ENCODE measurements at regions of chr22 and their contacts with region 1.

Region 1: GRCh38 chr22:30606455-30607299 is at the start of gene TCN2:
- DNase-seq: peak; percentile 64
- H3K4me3 ChIP-seq: peak within 1 kb of the TSS; percentile 27 to 48 (median 45)
- H3K27ac ChIP-seq: no peak within 1 kb of the TSS
- H3K4me1 ChIP-seq: peaks cover 16% of the 10 kb centered on the region
- H3K27me3 ChIP-seq: no peaks in the 10 kb centered on the region
- CTCF ChIP-seq: no peak
- total RNA-seq, gene TCN2: 3.6 to 9.3 TPM

Region 2: DNA sequence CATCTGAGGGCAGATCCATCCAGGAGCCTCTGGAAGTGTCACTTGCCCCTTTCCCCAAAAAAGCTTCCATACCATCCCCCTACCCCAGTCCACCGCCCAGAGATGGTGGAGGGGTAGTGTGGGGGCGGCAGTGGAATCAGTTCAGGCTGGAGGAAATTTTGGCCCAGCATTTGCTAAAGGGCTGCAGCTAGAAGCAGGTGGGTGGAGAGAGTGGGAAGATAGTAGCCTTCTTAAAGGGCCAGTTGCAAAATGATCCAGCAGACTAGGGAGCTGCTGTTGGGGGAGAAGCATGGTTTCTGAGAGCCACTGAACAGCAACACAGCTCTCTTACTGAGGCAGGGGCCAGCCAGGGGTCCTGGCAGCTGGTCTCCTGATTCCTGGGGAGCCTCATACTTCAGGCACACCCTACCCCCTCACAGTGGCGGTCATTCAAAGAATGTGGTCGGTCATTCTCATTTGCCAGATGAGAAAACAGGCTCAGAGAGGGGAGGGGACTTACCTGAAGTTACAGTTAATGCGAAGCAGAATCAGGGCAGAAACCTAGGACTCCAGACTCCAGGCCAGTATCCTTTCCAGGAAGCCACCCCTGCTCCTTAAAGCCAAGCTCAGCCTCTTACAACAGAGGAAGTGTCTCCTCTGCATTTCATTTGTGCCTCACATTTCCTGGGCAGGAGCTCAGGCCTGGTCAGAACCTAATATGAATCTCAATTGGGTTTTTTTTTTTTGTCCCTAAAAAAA is 204.5 kb before region 1 on chr22:
- CTCF ChIA-PET with region 1: interaction called, 11 read pairs
- dilution Hi-C with region 1: no loop called
- in situ Hi-C with region 1: no loop called
- intact Hi-C with region 1: no loop called
- DNase-seq: no peak
- H3K4me3 ChIP-seq: no peak overlapping the region
- H3K27ac ChIP-seq: no peak overlapping the region
- H3K4me1 ChIP-seq: peaks cover 40% of the 10 kb centered on the region
- H3K27me3 ChIP-seq: no peaks in the 10 kb centered on the region
- CTCF ChIP-seq: no peak

Region 3: DNA sequence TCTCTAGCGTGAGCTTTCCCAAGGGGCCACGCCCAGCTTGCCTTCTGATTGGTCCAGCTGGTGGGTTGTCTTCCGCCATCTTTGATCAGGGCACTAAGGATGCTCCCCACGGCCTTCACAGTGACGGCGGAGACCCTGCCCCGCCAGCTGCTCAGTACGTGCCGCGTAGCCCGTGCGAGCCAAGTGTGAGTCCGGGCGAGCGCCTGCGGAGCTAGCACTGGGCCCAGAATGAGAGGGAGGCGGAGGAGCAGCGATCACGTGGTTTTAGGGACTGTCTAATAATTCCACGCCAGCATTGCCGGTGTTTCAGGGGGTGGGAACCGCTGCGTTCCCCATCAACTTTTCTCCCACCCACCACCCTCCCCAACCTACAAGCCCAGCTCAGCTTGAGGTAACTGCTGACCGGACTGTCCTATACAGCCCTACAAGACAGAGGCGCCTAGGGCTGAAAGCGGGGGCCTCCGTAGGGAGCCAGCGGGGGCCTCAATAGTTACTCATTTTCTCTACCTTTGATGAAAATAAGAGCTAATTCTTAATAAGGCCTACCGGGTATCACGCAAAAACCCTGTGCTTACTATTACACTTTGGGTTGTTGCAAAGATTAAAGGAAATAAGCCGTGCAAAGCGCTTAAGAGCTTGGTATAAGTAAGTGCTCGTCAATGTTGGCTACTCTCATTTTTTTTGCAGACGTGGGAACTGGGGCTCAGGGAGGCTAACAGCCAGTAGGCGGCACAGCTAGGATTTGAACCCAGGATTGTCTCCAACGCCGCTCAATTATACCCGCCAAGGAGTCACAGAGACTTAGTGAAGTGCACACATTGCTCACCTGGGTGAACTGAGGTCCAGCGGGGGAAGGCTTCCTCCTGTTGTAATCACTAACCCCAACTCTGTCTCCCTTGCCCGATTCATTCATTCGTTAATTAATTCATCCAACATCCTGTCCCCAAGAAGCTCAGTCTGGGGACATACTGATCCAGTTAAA is 182.4 kb before region 1 on chr22:
- CTCF ChIA-PET with region 1: no interaction called
- dilution Hi-C with region 1: no loop called
- in situ Hi-C with region 1: no loop called
- intact Hi-C with region 1: no loop called
- DNase-seq: peak; percentile 98
- H3K4me3 ChIP-seq: peak overlapping the region in 2 of 3 experiments; percentile 26 to 37
- H3K27ac ChIP-seq: peak overlapping the region; percentile 94
- H3K4me1 ChIP-seq: peaks cover 76% of the 10 kb centered on the region
- H3K27me3 ChIP-seq: no peaks in the 10 kb centered on the region
- CTCF ChIP-seq: no peak

Region 4: DNA sequence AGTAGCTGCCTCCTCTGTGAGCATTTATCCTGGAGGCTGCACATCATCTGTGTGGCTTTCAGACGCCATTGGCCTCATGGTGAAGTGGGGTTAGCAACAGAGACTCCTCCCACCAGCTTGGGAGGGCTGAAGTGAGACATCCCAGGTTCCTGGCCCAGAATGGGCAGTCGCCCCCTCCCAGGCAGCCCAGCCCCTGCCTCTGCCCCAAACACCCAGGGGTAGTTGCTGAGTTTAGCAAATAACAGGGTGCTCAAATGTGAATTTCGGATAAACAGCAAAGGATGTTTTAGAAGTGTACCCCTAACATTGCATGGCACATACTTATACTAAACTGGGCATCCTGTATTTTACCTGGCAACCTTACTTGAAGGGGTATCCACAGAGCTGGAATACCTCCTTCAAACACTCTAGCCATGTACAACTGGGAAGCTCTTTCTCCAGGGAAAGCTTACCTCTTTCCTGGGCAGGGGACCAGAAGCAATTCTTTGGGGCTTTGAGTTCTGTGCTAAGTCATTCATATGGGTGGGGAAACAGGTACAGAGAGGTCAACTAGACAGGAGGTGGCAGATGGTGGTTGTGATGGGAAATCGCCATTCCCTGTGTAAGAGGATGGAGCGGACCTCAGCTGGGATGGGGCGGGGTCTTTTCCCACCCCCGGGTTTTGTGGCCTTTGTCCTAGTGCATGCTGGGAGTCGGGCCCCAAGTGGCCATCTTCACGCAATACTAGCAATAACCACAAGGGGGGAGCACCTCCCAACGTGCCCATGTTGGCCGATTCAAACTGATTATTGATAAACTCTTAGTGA is 161.8 kb before region 1 on chr22:
- CTCF ChIA-PET with region 1: no interaction called
- dilution Hi-C with region 1: no loop called
- in situ Hi-C with region 1: no loop called
- intact Hi-C with region 1: loop called (anchors 1 kb)
- DNase-seq: peak; percentile 34
- H3K4me3 ChIP-seq: no peak overlapping the region
- H3K27ac ChIP-seq: no peak overlapping the region
- H3K4me1 ChIP-seq: peaks cover 14% of the 10 kb centered on the region
- H3K27me3 ChIP-seq: no peaks in the 10 kb centered on the region
- CTCF ChIP-seq: peak; percentile 74 to 80

Region 5: DNA sequence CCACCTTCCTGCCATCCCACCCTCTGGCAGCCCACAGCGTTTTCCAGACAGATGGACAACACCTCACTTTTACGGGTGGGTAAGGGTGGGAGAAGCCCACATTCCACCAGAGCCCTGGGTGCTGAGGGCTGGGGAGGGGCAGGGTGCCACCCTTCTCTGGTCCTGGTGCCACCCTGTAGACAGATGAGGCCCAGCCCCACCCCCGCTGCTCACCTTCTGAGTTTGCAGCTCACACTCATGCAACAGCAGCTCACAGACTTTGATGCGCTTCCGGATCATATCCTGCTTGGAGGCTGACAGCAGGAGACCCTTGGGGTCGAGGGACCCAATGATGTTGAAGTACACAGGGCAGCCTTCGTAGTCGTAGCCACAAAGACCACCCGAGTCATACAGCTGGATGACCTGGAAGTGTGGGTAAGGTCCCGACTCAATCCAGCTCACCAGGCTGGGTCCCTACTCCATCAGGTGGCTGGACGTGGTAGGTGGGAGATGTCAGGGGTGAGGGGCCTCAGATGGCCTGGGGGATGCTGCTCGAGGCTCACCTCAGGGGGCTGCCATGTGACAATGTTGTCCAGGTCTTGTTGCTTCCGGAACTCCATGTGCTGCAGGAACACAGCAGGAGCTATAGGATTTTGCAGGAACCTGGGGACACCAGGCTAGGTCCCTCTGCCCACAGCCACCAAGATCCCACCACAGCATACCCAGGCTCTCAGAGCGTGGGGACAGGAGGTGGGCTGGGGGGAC is 111.5 kb before region 1 on chr22:
- CTCF ChIA-PET with region 1: interaction called, 10 read pairs
- dilution Hi-C with region 1: no loop called
- in situ Hi-C with region 1: no loop called
- intact Hi-C with region 1: no loop called
- DNase-seq: no peak
- H3K4me3 ChIP-seq: no peak overlapping the region
- H3K27ac ChIP-seq: no peak overlapping the region
- H3K4me1 ChIP-seq: no peaks in the 10 kb centered on the region
- H3K27me3 ChIP-seq: no peaks in the 10 kb centered on the region
- CTCF ChIP-seq: no peak

Region 6: DNA sequence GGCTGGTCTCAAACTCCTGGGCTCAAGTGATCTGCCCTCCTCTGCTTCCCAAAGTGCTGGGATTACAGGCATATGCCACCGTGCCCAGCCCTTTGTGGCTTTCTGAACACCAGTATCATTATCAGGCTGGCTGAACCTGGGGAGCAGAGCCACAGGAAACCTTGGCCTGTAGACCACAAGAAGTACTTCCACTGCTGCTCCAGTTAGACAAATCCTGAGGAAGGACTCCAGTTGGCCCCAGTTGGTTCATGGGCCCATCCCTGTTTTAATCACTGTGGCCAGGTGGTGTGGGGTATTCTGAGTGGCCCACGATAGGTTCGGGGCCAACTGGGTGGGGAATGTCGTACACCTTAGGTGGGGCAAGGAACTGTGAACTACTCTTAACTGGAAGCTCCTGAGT is 66.5 kb after region 1 on chr22:
- CTCF ChIA-PET with region 1: no interaction called
- dilution Hi-C with region 1: loop called (anchors 5 kb)
- in situ Hi-C with region 1: no loop called
- intact Hi-C with region 1: no loop called
- DNase-seq: no peak
- H3K4me3 ChIP-seq: no peak overlapping the region
- H3K27ac ChIP-seq: no peak overlapping the region
- H3K4me1 ChIP-seq: peaks cover 5% of the 10 kb centered on the region
- H3K27me3 ChIP-seq: no peaks in the 10 kb centered on the region
- CTCF ChIP-seq: no peak

Region 7: GRCh38 chr22:30694171-30694639 is 87.5 kb after region 1 on chr22:
- CTCF ChIA-PET with region 1: no interaction called
- dilution Hi-C with region 1: loop called (anchors 5 kb)
- in situ Hi-C with region 1: no loop called
- intact Hi-C with region 1: no loop called
- DNase-seq: peak; percentile 21
- H3K4me3 ChIP-seq: peak overlapping the region; percentile 40 to 70 (median 70)
- H3K27ac ChIP-seq: no peak overlapping the region
- H3K4me1 ChIP-seq: peaks cover 3% of the 10 kb centered on the region
- H3K27me3 ChIP-seq: no peaks in the 10 kb centered on the region
- CTCF ChIP-seq: no peak

Measured in mammary epithelial cell (primary cell).